Activated T-helper 1 cell treated with anti-CD3 and anti-CD28 coated beads, Interleukin-12 subunit alpha, Interleukin-12 subunit beta, Interleukin-2, Interleukin-4 antibody, amounts not matched to agents 30 ng/mL and 10 ng/mL and 1 ng/mL, durations not matched to agents 14 hours and 24 hours and 36 hours (primary cell): ENCODE measurements at regions of chr7 and their contacts with region 1.

Region 1: GRCh38 chr7:150356265-150356897 is 12.2 kb upstream of the REPIN1 start:
- DNase-seq: no peak
- H3K4me3 Mint-ChIP-seq: no peak overlapping the region
- H3K27ac Mint-ChIP-seq: no peak overlapping the region
- H3K4me1 Mint-ChIP-seq: peaks cover 44% of the 10 kb centered on the region
- H3K27me3 Mint-ChIP-seq: peaks cover 8% of the 10 kb centered on the region

Region 2: DNA sequence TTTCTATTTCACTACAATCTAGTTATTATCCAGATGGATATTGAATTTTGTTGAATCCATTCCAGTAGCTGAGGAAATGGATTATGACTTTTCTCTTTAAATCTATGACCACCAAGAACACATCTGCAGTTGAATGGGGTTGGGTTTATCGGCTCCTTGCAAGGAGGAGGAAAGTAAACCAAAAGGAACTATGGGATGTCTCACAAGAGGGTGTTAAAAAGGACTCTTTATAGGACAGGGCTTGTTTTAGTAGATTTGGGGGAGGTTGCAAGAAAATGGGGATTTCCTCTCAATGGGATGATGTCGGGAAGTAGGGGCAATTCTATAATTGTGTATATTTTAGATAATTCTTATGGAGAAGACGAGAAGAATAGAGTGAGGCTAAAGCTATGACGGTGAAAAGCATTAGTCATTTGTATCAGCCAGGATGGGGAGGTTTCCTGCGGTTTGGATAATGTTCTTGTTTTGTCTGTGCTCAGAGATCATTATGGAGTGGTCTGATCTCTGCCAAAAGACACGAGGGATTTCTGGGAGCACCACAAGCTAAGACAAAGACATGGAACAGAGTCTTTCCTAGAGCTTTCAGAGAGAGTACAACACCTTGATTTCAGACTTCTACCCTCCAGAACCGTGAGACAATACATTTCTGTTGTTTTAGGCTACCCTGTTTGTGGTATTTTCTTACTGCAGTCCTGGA is 38.5 kb before region 1 on chr7:
- intact Hi-C with region 1: no loop called
- DNase-seq: no peak
- H3K4me3 Mint-ChIP-seq: no peak overlapping the region
- H3K27ac Mint-ChIP-seq: no peak overlapping the region
- H3K4me1 Mint-ChIP-seq: peaks cover 33% of the 10 kb centered on the region
- H3K27me3 Mint-ChIP-seq: no peaks in the 10 kb centered on the region

Region 3: DNA sequence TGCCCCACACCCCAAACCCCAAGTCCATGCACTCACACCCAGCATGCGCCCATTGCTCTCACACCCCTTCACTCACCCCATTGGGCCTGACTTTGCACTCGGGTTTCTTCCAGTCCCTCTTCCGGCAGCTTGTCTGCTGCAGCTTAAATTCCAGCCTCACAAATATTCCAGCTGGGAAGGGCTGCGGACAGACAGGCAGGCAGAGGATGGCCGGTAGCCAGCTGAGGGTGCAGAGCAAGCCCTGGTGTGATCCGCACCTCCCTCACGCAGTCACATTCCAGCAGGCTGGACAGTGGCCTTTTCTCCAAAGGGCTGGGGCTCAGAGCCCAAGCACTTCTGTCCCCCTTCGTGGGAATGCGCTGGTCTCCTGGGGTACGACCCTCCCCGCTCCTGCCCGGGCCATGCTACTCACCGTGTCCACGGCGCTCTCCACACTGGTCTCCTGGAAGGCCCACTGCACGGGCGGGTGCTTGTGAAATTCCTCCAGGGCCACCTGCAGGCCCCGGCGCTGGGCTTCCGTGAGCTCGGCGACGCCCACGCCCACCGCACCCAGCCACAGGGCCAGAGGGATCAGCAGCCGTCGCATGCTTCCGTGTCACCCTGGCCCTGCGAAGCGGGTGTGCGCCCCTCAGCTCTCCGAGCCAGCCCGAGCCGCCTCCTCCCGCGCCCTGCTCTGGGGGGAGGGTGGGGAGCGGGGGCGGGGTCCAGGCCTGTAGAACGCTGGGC is 16.2 kb before region 1 on chr7:
- intact Hi-C with region 1: no loop called
- DNase-seq: no peak
- H3K4me3 Mint-ChIP-seq: no peak overlapping the region
- H3K27ac Mint-ChIP-seq: no peak overlapping the region
- H3K4me1 Mint-ChIP-seq: no peaks in the 10 kb centered on the region
- H3K27me3 Mint-ChIP-seq: peaks cover 34% of the 10 kb centered on the region

Region 4: DNA sequence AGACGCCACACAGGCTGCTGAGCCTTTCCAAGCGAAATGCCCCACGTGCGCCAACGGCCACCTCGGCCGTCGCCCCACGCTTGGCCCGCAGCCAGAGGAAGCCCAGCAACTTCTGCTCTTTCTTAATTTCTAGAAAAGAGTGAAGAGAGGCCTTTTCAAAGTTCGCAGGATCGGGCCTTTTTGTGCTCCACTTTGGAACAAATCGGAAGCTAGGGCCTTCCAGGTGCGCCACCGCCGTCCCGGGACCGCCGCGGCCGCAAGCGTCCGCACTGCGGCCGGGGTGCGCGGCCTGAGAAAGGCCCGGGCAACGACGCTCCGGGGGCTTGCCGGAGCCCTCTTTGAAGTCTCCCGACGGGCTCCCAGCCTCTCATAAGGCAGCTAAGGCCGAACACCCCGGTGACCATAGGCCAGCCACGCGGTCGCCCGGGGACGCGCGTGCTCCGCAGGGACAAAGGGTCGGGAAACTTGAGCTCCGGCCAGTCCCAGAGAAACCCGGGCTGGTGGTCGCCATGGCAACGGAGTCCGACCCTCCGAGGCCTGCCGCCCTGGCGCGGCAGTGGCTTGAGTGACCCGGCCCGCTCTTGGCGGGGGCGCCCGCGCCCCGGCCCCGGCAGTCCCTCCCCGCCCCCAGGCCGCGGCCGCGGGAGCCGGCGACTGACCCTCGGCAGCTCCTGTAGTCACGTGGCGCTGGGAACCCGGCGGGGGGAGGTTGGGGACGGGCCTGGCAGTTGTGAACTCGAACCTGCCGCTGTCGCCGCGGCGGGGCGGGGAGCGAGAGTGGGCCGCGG is 11.9 kb after region 1 on chr7 and contains the start of gene REPIN1:
- intact Hi-C with region 1: loop called (anchors 1 kb)
- DNase-seq: peak; percentile 73
- H3K4me3 Mint-ChIP-seq: peak within 1 kb of the TSS; percentile 94
- H3K27ac Mint-ChIP-seq: peak within 1 kb of the TSS; percentile 98
- H3K4me1 Mint-ChIP-seq: peaks cover 50% of the 10 kb centered on the region
- H3K27me3 Mint-ChIP-seq: peaks cover 1% of the 10 kb centered on the region
- total RNA-seq, gene REPIN1: 67.2 and 67.4 TPM in 2 replicates

Region 5: DNA sequence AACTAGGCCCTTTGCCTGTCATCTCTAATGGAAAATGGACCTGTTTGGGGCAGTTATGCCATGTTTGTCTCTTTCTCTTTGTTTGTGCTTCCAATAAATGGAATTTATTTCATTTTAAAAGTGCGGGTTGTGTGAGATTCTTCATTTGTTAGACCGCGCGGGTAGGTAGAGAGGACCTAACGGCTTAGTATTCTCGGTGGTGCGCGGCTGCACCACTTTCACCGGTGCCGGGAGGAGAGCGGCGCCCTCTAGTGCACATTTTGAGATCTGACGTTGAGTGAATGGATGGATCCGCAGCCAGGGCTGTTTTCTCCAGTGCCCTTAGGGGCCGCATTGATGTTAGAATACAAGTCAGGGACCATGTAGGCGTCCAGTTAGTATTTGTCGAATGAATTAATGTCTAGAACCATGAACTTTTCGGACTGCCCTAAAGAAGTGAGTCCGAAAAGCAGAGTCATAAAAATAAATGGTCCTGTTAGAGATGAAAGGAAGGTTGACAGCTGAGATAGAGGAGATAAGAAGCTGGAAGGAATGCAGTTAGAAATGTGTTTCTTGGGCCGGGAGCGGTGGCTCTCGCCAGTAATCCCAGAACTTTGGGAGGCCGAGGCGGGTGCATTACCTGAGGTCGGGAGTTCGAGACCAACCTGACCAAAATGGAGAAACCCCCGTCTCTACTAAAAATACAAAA is 64.8 kb after region 1 on chr7:
- intact Hi-C with region 1: loop called (anchors 1 kb)
- DNase-seq: peak; percentile 80
- H3K4me3 Mint-ChIP-seq: no peak overlapping the region
- H3K27ac Mint-ChIP-seq: no peak overlapping the region
- H3K4me1 Mint-ChIP-seq: peaks cover 12% of the 10 kb centered on the region
- H3K27me3 Mint-ChIP-seq: peaks cover 5% of the 10 kb centered on the region